ENCODE measurements at regions of chr14 and their contacts with region 1.

Region 1: GRCh38 chr14:75522224-75522982 is at the start of gene BATF:
- DNase-seq: no peak
- H3K4me3 ChIP-seq: no peak within 1 kb of the TSS
- H3K27ac ChIP-seq: peak within 1 kb of the TSS; percentile 82
- H3K4me1 ChIP-seq: peaks cover 25% of the 10 kb centered on the region
- H3K27me3 ChIP-seq: no peaks in the 10 kb centered on the region
- CTCF ChIP-seq: no peak
- POLR2A ChIP-seq: no peak
- total RNA-seq, gene BATF: not detected in 2 replicates

Region 2: DNA sequence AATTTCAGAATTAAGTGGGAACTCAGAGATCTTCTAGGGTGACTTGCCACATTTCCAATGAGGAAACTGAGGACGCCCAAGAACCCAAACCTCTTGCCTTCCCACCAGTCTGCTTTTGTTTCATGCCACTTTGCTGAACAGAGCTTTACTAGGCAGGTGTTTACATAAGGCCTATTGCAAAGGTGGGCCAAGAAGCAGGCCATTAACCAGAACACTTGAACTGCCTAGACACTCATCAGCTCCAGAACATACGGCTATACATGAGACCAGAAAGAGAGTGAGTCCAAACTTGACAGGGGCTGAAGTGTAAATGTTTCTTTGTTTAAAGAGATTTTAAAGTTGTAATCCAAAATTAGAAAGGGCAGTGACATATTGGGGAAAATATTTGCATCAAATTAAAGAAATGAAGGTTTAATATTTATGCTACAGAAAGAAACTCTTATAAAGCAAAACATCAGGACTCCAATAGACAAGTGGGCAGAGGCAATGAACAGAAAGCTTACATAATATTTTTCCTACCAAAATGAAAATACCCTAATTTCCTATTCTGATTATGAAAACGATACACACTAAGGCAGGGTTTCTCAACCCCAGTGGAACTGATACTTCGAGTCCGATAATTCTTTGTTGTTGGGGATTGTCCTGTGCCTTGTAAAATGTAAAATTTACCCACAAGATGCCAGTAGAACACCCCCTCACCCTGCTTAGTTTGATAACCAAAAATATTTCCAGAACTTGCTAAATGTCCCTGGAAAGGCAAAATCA is 11.6 kb after region 1 on chr14:
- CTCF ChIA-PET with region 1: interaction called, 10 read pairs
- POLR2A ChIA-PET with region 1: interaction called, 3 read pairs
- dilution Hi-C with region 1: no loop called
- intact Hi-C with region 1: loop called (anchors 1 kb)
- DNase-seq: no peak
- H3K4me3 ChIP-seq: no peak overlapping the region
- H3K27ac ChIP-seq: no peak overlapping the region
- H3K4me1 ChIP-seq: peaks cover 18% of the 10 kb centered on the region
- H3K27me3 ChIP-seq: no peaks in the 10 kb centered on the region
- CTCF ChIP-seq: no peak
- POLR2A ChIP-seq: no peak

Region 3: DNA sequence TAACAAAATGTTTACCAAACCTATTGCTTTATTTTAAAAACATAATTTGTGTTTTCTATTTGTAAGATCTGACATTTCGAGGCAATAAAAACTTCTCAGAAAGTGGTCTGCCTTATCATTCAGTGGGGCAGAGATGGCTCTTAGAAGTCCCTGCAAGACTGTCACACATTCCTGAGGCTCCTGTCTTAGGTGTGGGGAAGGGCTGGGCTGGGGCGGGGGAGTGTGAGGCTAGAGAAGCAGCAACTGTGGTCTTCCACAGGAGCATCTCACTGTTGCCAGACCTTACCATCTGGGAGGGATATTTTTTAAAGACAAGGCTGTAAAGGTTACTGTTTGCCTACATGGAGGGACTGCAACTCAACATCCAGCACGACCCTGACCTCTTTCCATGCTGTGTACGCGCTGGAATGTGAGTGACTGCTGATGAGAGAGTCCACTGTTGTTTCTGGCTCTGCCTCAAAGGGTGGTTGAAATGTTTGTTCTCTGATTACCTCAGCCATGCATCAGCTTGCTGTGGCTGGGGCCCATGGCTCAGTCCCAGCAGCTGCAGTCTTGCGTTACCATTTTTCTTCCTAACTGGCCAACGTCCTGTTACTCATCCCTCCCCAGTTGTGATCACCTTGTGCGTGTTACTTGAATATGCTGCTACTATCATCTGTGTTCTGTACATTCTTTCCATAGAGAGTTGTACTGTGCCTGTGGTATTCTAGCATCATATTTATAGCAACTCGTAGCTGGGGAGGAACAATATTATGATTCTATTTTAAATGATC is 125.8 kb after region 1 on chr14:
- CTCF ChIA-PET with region 1: no interaction called
- POLR2A ChIA-PET with region 1: no interaction called
- dilution Hi-C with region 1: no loop called
- intact Hi-C with region 1: loop called (anchors 5 kb)
- DNase-seq: peak; percentile 93
- H3K4me3 ChIP-seq: no peak overlapping the region
- H3K27ac ChIP-seq: peak overlapping the region; percentile 29
- H3K4me1 ChIP-seq: peaks cover 16% of the 10 kb centered on the region
- H3K27me3 ChIP-seq: no peaks in the 10 kb centered on the region
- CTCF ChIP-seq: no peak
- POLR2A ChIP-seq: no peak